Activated T-helper 1 cell treated with anti-CD3 and anti-CD28 coated beads, Interleukin-12 subunit alpha, Interleukin-12 subunit beta, Interleukin-2, Interleukin-4 antibody, amounts not matched to agents 30 ng/mL and 10 ng/mL and 1 ng/mL, durations not matched to agents 14 hours and 24 hours and 36 hours (primary cell): ENCODE measurements at regions of chrX and their contacts with region 1.

Region 1: DNA sequence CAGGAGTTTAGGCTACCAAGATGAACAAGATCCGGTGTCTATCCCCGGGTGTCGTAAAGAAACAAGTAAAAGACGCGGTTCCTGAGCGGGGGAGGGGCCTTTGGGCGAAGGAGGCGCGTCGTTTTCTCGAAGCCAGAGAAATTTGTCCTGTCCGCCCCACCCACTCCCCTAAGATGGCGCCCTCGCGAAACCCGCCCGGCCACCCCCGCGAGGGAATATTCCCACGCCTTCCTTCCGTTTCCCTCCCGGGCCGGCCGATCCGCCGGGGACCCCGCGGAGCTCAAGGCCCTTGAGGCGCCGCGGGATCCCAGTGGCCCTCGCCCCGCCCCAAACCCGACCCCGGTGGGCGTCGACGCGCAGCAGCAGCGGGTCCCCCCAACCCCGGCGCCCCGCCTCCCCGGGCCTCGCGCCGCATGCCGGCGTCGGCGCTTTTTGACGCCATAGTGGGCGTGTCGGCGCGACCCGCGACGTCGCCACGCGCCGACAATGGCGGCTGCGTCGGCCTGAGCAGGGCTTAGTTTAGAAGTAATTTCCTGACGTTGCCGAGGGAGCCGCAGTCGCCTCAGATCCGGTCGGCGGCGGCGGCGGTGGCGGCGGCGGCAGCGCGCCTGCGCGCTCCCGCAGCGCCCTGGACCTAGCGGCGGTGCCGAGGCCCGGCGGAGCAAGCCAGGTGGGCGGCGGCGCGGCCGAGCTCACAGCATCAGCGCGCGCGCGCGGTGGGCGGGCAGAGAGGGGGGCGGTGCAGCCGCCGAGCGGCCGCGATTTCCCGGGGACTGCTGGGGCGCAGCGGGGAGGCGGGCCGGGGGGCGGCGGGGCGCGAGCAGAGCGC is at the start of gene HTATSF1:
- DNase-seq: peak; percentile 83
- H3K4me3 Mint-ChIP-seq: peak within 1 kb of the TSS; percentile 92
- H3K27ac Mint-ChIP-seq: peak within 1 kb of the TSS; percentile 99
- H3K4me1 Mint-ChIP-seq: peaks cover 20% of the 10 kb centered on the region
- H3K27me3 Mint-ChIP-seq: no peaks in the 10 kb centered on the region
- total RNA-seq, gene HTATSF1: 50.2 and 54.2 TPM in 2 replicates

Region 2: DNA sequence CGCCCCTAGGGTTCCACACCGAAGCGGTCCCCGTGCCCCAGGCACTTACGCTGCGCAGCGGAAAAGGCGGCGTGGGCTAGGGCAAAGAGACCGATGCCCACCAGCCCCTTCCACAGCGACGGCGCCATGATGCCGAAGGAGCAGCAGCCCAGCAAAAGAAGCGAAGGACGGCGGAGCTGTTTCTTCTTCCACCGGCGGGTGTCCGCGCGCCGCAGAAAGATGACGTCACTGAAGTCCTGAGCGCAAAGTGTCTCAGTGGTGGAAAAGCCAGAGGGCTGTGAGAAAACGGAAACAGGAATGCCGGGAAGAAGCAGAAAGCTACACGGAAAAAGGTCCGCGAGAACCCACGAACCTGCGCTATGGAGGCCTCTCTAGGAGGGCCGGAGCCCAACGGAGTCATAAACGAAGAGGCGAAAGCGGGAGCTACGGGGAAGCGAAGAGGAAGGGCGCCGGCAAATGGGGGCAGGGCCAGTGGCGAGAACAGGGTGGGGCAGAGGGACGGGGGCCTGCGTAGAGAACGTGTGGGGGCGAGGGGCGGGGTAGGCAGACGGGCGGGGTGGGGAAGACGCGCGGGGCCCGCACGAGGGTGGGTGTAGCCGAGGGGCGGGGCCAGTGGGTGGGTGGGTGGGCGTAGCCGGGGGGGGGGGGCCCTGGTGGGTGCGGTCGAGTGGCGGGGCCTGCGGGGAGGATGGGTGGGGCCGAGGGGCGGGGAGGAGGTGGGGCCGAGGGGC is 523.3 kb before region 1 on chrX and contains the start of gene MMGT1:
- intact Hi-C with region 1: loop called (anchors 1 kb)
- DNase-seq: peak; percentile 74
- H3K4me3 Mint-ChIP-seq: peak within 1 kb of the TSS; percentile 90
- H3K27ac Mint-ChIP-seq: peak within 1 kb of the TSS; percentile 91
- H3K4me1 Mint-ChIP-seq: peaks cover 40% of the 10 kb centered on the region
- H3K27me3 Mint-ChIP-seq: peaks cover 2% of the 10 kb centered on the region
- total RNA-seq, gene MMGT1: 25.2 and 26.4 TPM in 2 replicates

Region 3: GRCh38 chrX:136209016-136209738 is 287.8 kb before region 1 on chrX:
- intact Hi-C with region 1: no loop called
- DNase-seq: no peak
- H3K4me3 Mint-ChIP-seq: no peak overlapping the region
- H3K27ac Mint-ChIP-seq: no peak overlapping the region
- H3K4me1 Mint-ChIP-seq: peaks cover 19% of the 10 kb centered on the region
- H3K27me3 Mint-ChIP-seq: no peaks in the 10 kb centered on the region

Region 4: DNA sequence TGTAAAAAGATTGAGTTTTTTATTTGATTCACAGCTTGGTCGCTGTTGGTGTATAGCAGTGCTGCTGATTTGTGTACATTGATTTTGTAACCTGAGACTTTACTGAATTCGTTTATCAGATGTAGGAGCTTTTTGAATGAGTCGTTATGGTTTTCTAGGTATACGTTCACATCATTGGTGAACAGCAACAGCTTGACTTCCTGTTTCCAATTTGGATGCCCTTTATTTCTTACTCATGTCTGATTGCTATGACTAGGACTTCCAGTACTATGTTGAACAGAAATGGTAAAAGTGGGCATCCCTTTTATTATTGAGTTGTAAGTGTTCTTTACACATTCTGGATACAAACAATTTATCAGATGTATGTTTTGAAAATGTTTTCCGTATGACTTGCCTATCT is 120.3 kb before region 1 on chrX:
- intact Hi-C with region 1: loop called (anchors 5 kb)
- DNase-seq: no peak
- H3K4me3 Mint-ChIP-seq: no peak overlapping the region
- H3K27ac Mint-ChIP-seq: no peak overlapping the region
- H3K4me1 Mint-ChIP-seq: no peaks in the 10 kb centered on the region
- H3K27me3 Mint-ChIP-seq: peaks cover 1% of the 10 kb centered on the region

Region 5: GRCh38 chrX:136658151-136658550 is 161.2 kb after region 1 on chrX:
- intact Hi-C with region 1: loop called (anchors 2 kb)
- DNase-seq: no peak
- H3K4me3 Mint-ChIP-seq: peak overlapping the region; percentile 99
- H3K27ac Mint-ChIP-seq: peak overlapping the region; percentile 94
- H3K4me1 Mint-ChIP-seq: peaks cover 89% of the 10 kb centered on the region
- H3K27me3 Mint-ChIP-seq: no peaks in the 10 kb centered on the region

Region 6: GRCh38 chrX:136780763-136781162 is 283.8 kb after region 1 on chrX and contains the start of gene ARHGEF6:
- intact Hi-C with region 1: loop called (anchors 2 kb)
- DNase-seq: peak; percentile 9
- H3K4me3 Mint-ChIP-seq: peak within 1 kb of the TSS; percentile 93
- H3K27ac Mint-ChIP-seq: peak within 1 kb of the TSS; percentile 95
- H3K4me1 Mint-ChIP-seq: peaks cover 64% of the 10 kb centered on the region
- H3K27me3 Mint-ChIP-seq: no peaks in the 10 kb centered on the region
- total RNA-seq, gene ARHGEF6: 39.8 and 40.8 TPM in 2 replicates

Region 7: GRCh38 chrX:137051978-137052642 is 555.1 kb after region 1 on chrX:
- intact Hi-C with region 1: loop called (anchors 10 kb)
- DNase-seq: peak; percentile 71
- H3K4me3 Mint-ChIP-seq: peak overlapping the region; percentile 87
- H3K27ac Mint-ChIP-seq: peak overlapping the region; percentile 40
- H3K4me1 Mint-ChIP-seq: peaks cover 11% of the 10 kb centered on the region
- H3K27me3 Mint-ChIP-seq: peaks cover 28% of the 10 kb centered on the region